ENCODE measurements at regions of chr2 and their contacts with region 1.

Region 1: DNA sequence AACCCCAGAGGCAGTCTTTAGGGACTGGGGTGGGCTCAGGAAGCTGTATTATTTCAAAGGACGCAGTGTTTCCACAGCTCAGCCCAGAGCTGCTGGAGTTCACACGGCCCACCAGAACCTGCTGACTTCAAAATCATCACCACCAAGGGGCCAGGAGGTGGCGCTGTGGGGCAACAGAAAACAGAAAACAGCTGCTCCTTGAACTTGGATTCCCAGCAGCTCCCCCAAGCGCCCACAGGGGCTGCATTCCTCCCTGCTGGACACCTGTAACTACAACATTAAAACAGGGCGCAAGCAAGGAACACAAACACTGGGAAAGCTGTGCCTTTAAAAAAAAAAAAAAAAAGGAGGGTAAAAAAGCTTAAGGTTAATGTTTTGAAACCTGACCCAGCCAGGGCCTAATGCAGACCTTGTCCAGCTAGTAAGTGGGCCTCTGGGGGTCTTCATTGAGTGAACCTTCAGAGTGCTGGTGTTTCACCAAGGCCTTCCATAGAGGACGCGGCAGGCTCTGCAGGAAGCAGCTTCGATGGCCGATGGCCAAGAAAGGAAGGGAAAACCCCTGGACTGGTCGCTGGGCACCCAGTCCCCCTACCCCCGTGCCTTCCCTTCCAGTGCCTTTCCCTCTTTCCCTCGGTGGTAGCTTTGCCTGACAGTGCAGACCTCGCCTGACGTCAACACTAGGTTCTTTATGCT is 25.9 kb downstream of the MLPH start:
- DNase-seq: peak; percentile 90
- ATAC-seq: peak; percentile 92
- H3K4me3 Mint-ChIP-seq: no peak overlapping the region
- H3K27ac Mint-ChIP-seq: no peak overlapping the region
- H3K4me1 Mint-ChIP-seq: no peaks in the 10 kb centered on the region
- H3K27me3 Mint-ChIP-seq: no peaks in the 10 kb centered on the region

Region 2: GRCh38 chr2:237500681-237501424 is 12.1 kb before region 1 on chr2:
- CTCF ChIA-PET with region 1: interaction called, 27 read pairs
- POLR2A ChIA-PET with region 1: no interaction called
- intact Hi-C with region 1: no loop called
- DNase-seq: no peak
- ATAC-seq: peak; percentile 51
- H3K4me3 Mint-ChIP-seq: no peak overlapping the region
- H3K27ac Mint-ChIP-seq: no peak overlapping the region
- H3K4me1 Mint-ChIP-seq: peaks cover 3% of the 10 kb centered on the region
- H3K27me3 Mint-ChIP-seq: peaks cover 22% of the 10 kb centered on the region

Region 3: DNA sequence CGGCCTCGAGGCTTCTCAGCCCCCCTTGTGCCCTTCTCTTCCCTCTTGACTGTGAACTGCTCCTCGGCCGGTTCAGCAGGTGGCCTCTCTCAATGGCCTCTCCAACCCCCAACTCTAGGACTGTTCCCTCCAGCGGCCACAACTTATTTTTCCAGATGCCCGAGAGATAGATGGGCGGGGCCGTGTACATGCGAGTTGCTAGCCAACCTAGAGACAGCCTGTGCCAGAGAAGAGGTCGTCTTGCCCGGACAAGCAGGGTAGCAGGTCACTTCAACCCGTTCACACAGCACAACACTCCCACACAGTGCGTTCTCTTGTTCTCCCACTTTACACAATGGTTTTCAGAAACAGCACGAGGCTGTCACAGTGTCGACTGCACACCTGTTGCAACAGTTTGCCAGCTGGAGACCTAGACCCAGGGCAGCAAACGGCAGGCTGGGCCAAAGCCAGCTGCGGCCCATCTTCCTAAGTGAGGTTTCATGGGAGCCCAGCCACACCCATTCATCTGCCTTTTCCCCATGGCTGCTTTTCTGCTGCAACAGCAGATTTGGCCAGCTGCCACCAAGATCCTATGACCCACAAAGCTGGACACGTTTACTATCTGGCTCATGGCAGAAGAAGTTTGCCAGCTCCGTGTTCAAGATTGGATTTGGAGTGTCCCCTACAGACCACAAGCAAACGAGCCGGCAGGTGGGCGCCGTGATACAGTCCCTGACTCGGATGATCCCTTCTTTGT is 46.2 kb after region 1 on chr2:
- CTCF ChIA-PET with region 1: interaction called, 17 read pairs
- POLR2A ChIA-PET with region 1: no interaction called
- intact Hi-C with region 1: no loop called
- DNase-seq: no peak
- ATAC-seq: no peak
- H3K4me3 Mint-ChIP-seq: no peak overlapping the region
- H3K27ac Mint-ChIP-seq: no peak overlapping the region
- H3K4me1 Mint-ChIP-seq: peaks cover 13% of the 10 kb centered on the region
- H3K27me3 Mint-ChIP-seq: peaks cover 9% of the 10 kb centered on the region

Region 4: DNA sequence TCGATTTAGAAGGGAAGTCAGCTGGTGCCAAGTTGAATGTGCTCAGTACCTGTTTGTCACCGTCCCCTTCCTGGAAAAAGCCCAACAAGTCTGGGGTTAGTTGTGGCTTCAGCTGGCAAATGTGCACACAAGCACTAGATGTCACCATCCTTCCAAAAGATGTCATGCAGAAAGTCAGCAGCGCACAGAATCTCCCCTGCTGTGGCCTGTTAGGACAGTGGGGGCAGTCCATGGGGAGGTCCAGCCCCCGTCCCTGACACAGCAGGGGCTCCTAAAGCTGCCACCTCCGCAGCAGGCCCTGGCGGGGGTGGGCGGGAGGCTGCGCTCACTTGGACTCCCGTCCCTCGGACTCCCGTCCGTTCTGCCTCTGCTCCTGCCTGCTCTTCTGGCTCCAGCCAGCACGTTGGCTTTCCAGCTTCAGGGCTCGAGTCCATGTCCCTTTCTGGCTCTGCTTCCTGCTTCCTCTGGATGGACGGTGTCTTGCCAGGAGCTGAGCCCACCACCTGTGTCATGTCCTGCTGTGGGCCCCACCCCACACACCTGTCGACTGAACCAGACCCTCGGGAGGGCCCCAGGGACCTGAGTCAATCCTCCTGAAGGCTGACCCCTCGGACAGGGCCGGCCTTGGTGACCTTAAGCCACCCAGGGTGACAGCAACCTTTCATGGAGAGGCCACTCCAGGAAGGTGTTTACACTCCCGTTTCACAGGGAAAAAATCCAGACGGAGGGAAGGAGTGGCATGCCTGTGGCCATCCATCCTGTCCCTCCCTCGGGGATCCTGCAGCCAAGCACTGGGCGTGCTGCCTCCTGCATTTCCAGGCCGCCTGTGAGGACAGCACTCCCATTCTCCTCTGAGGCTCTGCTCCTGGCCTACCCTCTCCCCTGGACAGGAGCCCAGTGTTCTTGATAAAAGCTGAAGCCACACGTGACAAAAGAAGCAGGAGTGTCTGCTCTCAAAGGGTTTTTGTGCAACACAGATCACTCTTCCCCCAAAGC is 69.1 kb after region 1 on chr2:
- CTCF ChIA-PET with region 1: interaction called, 23 read pairs
- POLR2A ChIA-PET with region 1: no interaction called
- intact Hi-C with region 1: no loop called
- DNase-seq: peak; percentile 82
- ATAC-seq: peak; percentile 99
- H3K4me3 Mint-ChIP-seq: no peak overlapping the region
- H3K27ac Mint-ChIP-seq: peak overlapping the region; percentile 58
- H3K4me1 Mint-ChIP-seq: peaks cover 3% of the 10 kb centered on the region
- H3K27me3 Mint-ChIP-seq: no peaks in the 10 kb centered on the region

Measured in activated CD4-positive, alpha-beta T cell treated with anti-CD3 and anti-CD28 coated beads for 36 hours (primary cell).